Posterior vena cava (tissue), 2 donors: ENCODE measurements at regions of chr11 and their contacts with region 1.

Region 1: GRCh38 chr11:108929241-108929640 is 264.4 kb downstream of the DDX10 start:
- DNase-seq: no peak

Region 2: DNA sequence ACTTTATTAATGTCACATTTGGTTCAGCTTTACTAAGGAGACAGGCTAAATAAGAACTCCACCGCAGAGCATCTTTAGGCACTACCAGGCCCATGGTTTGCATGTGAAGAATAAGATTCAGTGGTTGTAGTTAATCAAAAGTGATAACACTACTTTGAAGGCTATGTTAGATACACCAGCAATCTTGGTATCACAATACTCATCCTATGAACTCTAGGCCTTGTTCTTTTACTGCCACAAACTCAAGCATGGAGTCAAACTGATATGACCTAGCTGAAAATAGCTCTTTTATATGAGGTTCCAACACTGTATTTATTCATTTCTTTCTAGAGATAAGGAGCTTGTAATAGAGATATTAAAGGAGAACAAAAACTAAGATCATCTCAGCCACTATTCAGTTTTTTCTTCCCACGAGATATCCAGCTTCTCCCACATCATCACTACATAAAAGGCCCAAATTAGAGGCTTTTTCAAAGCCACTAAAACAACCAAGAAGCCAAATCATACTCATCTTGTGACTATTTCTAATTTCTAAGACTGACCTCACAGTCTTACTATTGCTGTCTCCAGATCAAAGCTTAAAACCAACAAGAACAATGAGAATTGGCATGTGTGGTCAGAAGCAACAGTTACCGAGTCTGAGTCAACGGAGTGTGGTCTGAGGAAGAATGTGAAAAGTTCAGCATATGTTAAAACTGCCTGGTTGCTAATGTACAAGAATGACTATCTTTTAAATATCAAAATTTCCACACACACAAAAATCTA is 1885.8 kb before region 1 on chr11:
- intact Hi-C with region 1: loop called in 1 of 2 experiments (anchors 10 kb)
- DNase-seq: no peak